GM23248 (cell line): ENCODE measurements at regions of chr12 and their contacts with region 1.

Region 1: DNA sequence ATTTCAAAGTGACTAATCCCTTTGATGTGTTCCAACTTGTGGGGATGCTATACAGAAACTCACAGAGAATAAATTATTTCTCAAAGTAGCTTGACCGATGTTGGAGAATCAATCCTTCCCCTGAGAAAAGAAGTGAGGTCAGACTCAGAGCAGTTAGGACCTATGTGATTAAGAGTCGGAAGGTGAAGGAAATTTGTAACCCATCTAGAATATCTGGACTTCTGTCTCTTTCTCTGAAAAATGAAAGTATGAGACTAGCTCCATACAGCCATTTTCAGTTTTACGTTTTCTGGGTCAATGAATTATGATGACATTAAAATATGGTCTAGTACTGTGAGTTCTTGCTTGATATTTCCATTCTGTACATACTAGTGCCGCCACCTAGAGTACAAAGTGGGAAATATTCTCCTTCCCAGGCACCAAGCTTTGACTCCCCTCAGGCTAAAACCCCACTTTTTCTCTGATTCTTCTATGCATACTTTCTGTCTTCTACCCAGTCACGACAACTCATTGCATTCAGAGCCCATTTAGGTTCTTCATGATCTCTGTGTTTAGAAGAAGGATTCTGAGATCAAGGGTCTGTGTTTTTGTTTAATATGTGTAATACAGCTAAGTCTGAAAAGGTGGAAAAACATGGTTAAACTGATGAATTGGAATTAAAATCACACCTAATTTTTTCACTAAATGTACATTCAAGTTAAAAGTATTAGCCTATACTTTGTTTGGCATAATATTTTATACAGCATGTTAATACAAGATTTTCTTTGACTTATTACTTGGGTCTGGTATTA is 6.9 kb upstream of the NTS start:
- DNase-seq: peak; percentile 71
- H3K4me3 ChIP-seq: peak overlapping the region; percentile 37; the same call in 1 of the 2 replicates
- H3K27ac ChIP-seq: no peak overlapping the region
- H3K4me1 ChIP-seq: 0 out of 2 replicates have a peak, but pooled peaks cover 9% of the 10 kb centered on the region
- H3K27me3 ChIP-seq: no peaks in the 10 kb centered on the region

Region 2: GRCh38 chr12:85424581-85425348 is 442.4 kb before region 1 on chr12:
- in situ Hi-C with region 1: no loop called
- DNase-seq: peak; percentile 64
- H3K4me3 ChIP-seq: no peak overlapping the region
- H3K27ac ChIP-seq: no peak overlapping the region
- H3K4me1 ChIP-seq: no peaks in the 10 kb centered on the region
- H3K27me3 ChIP-seq: peaks cover 44% of the 10 kb centered on the region

Region 3: DNA sequence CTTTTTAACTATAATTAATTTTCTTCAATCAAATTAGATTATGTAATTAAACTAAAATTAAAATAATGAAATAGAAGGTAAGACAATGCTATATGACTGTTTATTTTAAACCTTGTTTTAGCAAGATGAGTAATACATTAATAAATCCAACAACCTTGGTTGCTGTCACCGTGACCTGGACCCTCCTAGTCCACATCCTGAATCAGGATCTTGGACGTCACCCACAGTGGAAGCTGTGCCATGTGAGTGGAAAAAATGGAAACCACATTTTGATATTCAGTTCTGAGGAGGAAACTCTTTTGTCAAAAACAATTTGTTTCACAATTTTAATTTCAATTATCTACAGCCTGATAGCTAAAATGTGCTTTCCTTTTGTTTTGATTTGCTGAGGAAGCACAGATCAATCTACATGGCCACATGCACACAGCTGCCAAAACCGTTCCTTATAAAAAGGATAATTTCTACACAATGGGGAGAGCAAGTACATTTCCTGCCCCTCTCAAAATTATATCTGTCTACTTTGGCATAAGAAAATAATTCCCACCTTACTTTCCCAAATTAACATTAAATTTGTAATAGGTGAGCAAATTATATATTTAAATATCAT is 286.5 kb before region 1 on chr12:
- in situ Hi-C with region 1: loop called (anchors 5 kb)
- DNase-seq: peak; percentile 17
- H3K4me3 ChIP-seq: no peak overlapping the region
- H3K27ac ChIP-seq: no peak overlapping the region
- H3K4me1 ChIP-seq: 0 out of 2 replicates have a peak, but pooled peaks cover 3% of the 10 kb centered on the region
- H3K27me3 ChIP-seq: no peaks in the 10 kb centered on the region

Region 4: DNA sequence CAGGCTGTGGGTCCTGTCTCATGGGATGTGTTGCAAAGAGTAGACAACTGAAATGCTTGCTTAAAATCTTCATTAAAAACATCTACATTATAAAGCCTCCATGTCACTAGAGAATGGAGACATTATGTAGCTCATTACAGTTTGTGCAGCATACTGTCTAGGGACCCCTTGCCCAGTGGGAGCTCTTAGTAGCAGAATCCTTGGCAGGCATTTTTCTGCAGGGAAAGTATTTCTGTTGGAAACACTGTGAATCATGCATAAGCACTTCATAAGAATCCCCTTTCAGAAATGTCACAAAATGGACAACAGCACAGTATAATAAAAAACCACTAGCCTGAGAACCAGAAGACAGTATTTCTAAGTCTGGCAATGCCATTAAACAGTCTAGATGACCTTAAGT is 214.7 kb after region 1 on chr12:
- in situ Hi-C with region 1: no loop called
- DNase-seq: no peak
- H3K4me3 ChIP-seq: no peak overlapping the region
- H3K27ac ChIP-seq: no peak overlapping the region
- H3K4me1 ChIP-seq: no peaks in the 10 kb centered on the region
- H3K27me3 ChIP-seq: no peaks in the 10 kb centered on the region; the same call in 1 of the 2 replicates